Activated CD8-positive, alpha-beta T cell treated with anti-CD3 and anti-CD28 coated beads for 36 hours (primary cell): ENCODE measurements at regions of chr7 and their contacts with region 1.

Region 1: GRCh38 chr7:144127703-144128334 is 4.8 kb downstream of the OR2A14 start:
- DNase-seq: peak; percentile 97
- ATAC-seq: peak; percentile 100
- H3K4me3 Mint-ChIP-seq: no peak overlapping the region
- H3K27ac Mint-ChIP-seq: no peak overlapping the region
- H3K4me1 Mint-ChIP-seq: peaks cover 4% of the 10 kb centered on the region
- H3K27me3 Mint-ChIP-seq: no peaks in the 10 kb centered on the region
- CTCF ChIP-seq: peak; percentile 90

Region 2: GRCh38 chr7:143735962-143736361 is 391.9 kb before region 1 on chr7:
- CTCF ChIA-PET with region 1: interaction called, 16 read pairs
- POLR2A ChIA-PET with region 1: no interaction called
- intact Hi-C with region 1: no loop called
- DNase-seq: no peak
- ATAC-seq: no peak
- H3K4me3 Mint-ChIP-seq: no peak overlapping the region
- H3K27ac Mint-ChIP-seq: no peak overlapping the region
- H3K4me1 Mint-ChIP-seq: peaks cover 18% of the 10 kb centered on the region
- H3K27me3 Mint-ChIP-seq: no peaks in the 10 kb centered on the region
- CTCF ChIP-seq: no peak

Region 3: GRCh38 chr7:143901668-143902331 is 226.0 kb before region 1 on chr7 and contains the start of gene TCAF1:
- CTCF ChIA-PET with region 1: interaction called, 19 read pairs
- POLR2A ChIA-PET with region 1: no interaction called
- intact Hi-C with region 1: loop called (anchors 10 kb)
- DNase-seq: peak; percentile 96
- ATAC-seq: peak; percentile 93
- H3K4me3 Mint-ChIP-seq: peak within 1 kb of the TSS; percentile 90
- H3K27ac Mint-ChIP-seq: peak within 1 kb of the TSS; percentile 92
- H3K4me1 Mint-ChIP-seq: peaks cover 30% of the 10 kb centered on the region
- H3K27me3 Mint-ChIP-seq: no peaks in the 10 kb centered on the region
- CTCF ChIP-seq: peak; percentile 30
- total RNA-seq, gene TCAF1: 13.8 to 14.7 TPM

Region 4: GRCh38 chr7:144027070-144027469 is 100.7 kb before region 1 on chr7:
- CTCF ChIA-PET with region 1: interaction called, 11 read pairs
- POLR2A ChIA-PET with region 1: no interaction called
- intact Hi-C with region 1: no loop called
- DNase-seq: no peak
- ATAC-seq: no peak
- H3K4me3 Mint-ChIP-seq: no peak overlapping the region
- H3K27ac Mint-ChIP-seq: no peak overlapping the region
- H3K4me1 Mint-ChIP-seq: peaks cover 7% of the 10 kb centered on the region
- H3K27me3 Mint-ChIP-seq: peaks cover 8% of the 10 kb centered on the region
- CTCF ChIP-seq: no peak

Region 5: DNA sequence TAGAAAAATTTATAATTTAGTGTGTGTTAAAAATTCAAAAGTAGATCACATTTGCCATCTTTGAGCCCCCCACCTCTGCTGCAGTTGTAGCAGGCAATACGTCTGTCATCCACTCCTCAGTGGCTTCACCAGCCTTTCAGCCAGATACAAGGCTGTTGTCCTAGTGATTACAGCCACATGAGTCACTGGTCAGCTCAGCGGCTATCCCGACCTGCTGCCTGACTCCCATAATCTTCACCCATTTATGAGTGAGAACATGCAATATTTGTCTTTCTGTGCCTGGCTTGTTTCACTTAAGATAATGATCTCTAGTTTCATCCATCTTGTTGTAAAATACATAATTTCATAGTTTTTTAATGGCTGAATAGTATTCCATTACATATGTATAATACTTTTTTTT is 69.8 kb before region 1 on chr7:
- CTCF ChIA-PET with region 1: interaction called, 9 read pairs
- POLR2A ChIA-PET with region 1: no interaction called
- intact Hi-C with region 1: loop called (anchors 2 kb)
- DNase-seq: no peak
- ATAC-seq: no peak
- H3K4me3 Mint-ChIP-seq: no peak overlapping the region
- H3K27ac Mint-ChIP-seq: no peak overlapping the region
- H3K4me1 Mint-ChIP-seq: no peaks in the 10 kb centered on the region
- H3K27me3 Mint-ChIP-seq: peaks cover 8% of the 10 kb centered on the region
- CTCF ChIP-seq: no peak